Activated CD4-positive, alpha-beta T cell treated with anti-CD3 and anti-CD28 coated beads, Interleukin-2, amount 10 ng/mL, durations not matched to agents 24 days and 14 days (primary cell): ENCODE measurements at regions of chr17 and their contacts with region 1.

Region 1: GRCh38 chr17:68205251-68205807 is 42.5 kb upstream of the AMZ2 start:
- DNase-seq: peak; percentile 98
- H3K4me3 Mint-ChIP-seq: peak overlapping the region; percentile 85
- H3K27ac Mint-ChIP-seq: peak overlapping the region; percentile 90
- H3K4me1 Mint-ChIP-seq: peaks cover 23% of the 10 kb centered on the region
- H3K27me3 Mint-ChIP-seq: peaks cover 10% of the 10 kb centered on the region

Region 2: GRCh38 chr17:68172461-68172954 is 32.8 kb before region 1 on chr17:
- intact Hi-C with region 1: loop called (anchors 1 kb)
- DNase-seq: peak; percentile 93
- H3K4me3 Mint-ChIP-seq: no peak overlapping the region
- H3K27ac Mint-ChIP-seq: no peak overlapping the region
- H3K4me1 Mint-ChIP-seq: peaks cover 23% of the 10 kb centered on the region
- H3K27me3 Mint-ChIP-seq: peaks cover 1% of the 10 kb centered on the region

Region 3: GRCh38 chr17:68184816-68185436 is 20.4 kb before region 1 on chr17:
- intact Hi-C with region 1: loop called (anchors 1 kb)
- DNase-seq: peak; percentile 92
- H3K4me3 Mint-ChIP-seq: peak overlapping the region; percentile 73
- H3K27ac Mint-ChIP-seq: peak overlapping the region; percentile 65
- H3K4me1 Mint-ChIP-seq: peaks cover 41% of the 10 kb centered on the region
- H3K27me3 Mint-ChIP-seq: peaks cover 3% of the 10 kb centered on the region

Region 4: DNA sequence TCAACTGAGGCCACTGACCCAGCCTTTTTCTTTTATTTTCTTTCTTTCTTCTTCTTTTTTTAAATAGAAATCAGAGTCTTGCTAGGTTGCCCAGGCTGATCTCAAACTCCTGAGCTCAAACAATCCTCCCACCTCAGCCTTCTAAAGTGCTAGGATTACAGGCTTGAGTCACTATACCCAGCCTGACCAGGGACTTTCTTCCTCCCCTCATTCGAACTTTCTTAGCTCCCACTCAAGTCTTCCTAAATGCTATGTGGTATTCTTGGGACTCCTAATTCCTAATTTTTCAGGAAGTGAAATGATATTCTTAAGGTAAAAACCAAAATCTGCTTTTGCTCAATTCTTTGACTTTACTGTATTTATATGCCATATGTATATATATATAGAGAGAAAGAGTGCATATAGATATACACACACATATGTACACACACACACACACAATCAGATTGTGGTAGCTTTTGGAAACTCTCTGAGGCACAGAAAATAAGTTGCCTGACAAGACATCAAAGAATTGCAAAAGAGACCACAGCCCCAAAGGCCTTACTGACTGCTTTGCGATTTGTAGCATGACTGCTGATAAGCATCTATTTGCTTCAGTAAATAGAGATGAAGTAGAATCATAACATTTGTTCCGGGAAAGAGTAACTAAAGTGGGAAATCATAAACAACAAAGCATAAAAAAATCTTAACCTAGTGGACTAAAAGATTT is 33.0 kb after region 1 on chr17:
- intact Hi-C with region 1: loop called (anchors 2 kb)
- DNase-seq: peak; percentile 85
- H3K4me3 Mint-ChIP-seq: peak overlapping the region; percentile 82
- H3K27ac Mint-ChIP-seq: peak overlapping the region; percentile 98
- H3K4me1 Mint-ChIP-seq: peaks cover 52% of the 10 kb centered on the region
- H3K27me3 Mint-ChIP-seq: no peaks in the 10 kb centered on the region

Region 5: DNA sequence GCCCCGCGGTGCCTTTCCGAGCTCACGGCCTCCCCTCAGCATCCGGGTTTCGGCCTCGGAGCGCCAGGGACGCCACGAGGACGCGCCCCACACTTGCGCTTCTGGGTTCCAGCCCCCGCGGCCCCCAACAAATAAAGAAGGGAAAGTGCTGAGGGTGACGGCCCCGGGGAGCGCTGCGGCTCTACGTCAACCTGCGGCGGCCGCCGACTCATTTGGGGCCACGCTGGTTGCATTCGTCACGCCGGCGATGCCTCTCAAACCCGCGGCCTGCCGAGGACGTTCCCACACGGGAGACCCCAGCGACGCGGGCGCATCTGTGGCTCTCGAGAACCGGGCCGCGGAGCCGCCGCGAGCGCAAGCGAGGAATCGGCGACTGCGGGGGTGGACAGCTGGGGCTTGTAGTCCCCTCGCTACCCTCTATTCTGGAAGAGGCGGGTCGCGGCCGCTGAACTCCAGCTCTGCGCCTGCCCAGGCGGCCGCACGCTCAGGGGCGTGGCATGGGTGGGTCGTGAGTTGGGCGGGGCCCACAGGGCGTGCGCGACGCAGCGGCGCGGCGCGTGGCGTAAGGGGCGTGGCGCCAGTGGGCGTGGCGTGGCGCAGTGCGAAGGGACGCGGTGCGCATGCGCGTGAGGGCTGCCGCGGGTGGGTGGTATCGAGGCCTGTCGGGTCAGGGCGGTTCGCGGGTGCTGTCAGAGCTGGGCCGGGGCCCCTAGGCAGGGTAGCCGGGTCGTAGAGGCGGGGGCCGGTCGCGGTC is 42.3 kb after region 1 on chr17 and contains the start of gene AMZ2:
- intact Hi-C with region 1: loop called (anchors 2 kb)
- DNase-seq: peak; percentile 100
- H3K4me3 Mint-ChIP-seq: peak within 1 kb of the TSS; percentile 86
- H3K27ac Mint-ChIP-seq: peak within 1 kb of the TSS; percentile 93
- H3K4me1 Mint-ChIP-seq: peaks cover 37% of the 10 kb centered on the region
- H3K27me3 Mint-ChIP-seq: no peaks in the 10 kb centered on the region
- total RNA-seq, gene AMZ2: 75.8 and 77.5 TPM in 2 replicates

Region 6: GRCh38 chr17:68435876-68436842 is 230.8 kb after region 1 on chr17:
- intact Hi-C with region 1: loop called (anchors 1 kb)
- DNase-seq: peak; percentile 95
- H3K4me3 Mint-ChIP-seq: peak overlapping the region; percentile 33
- H3K27ac Mint-ChIP-seq: peak overlapping the region; percentile 89
- H3K4me1 Mint-ChIP-seq: peaks cover 53% of the 10 kb centered on the region
- H3K27me3 Mint-ChIP-seq: no peaks in the 10 kb centered on the region

Region 7: GRCh38 chr17:68512247-68512982 is 307.1 kb after region 1 on chr17 and contains the start of gene PRKAR1A:
- intact Hi-C with region 1: loop called (anchors 5 kb)
- DNase-seq: peak; percentile 98
- H3K4me3 Mint-ChIP-seq: peak within 1 kb of the TSS; percentile 99
- H3K27ac Mint-ChIP-seq: peak within 1 kb of the TSS; percentile 99
- H3K4me1 Mint-ChIP-seq: peaks cover 61% of the 10 kb centered on the region
- H3K27me3 Mint-ChIP-seq: no peaks in the 10 kb centered on the region
- total RNA-seq, gene PRKAR1A: 194 and 207 TPM in 2 replicates